Caco-2 (cell line): ENCODE measurements at regions of chr15 and their contacts with region 1.

Region 1: DNA sequence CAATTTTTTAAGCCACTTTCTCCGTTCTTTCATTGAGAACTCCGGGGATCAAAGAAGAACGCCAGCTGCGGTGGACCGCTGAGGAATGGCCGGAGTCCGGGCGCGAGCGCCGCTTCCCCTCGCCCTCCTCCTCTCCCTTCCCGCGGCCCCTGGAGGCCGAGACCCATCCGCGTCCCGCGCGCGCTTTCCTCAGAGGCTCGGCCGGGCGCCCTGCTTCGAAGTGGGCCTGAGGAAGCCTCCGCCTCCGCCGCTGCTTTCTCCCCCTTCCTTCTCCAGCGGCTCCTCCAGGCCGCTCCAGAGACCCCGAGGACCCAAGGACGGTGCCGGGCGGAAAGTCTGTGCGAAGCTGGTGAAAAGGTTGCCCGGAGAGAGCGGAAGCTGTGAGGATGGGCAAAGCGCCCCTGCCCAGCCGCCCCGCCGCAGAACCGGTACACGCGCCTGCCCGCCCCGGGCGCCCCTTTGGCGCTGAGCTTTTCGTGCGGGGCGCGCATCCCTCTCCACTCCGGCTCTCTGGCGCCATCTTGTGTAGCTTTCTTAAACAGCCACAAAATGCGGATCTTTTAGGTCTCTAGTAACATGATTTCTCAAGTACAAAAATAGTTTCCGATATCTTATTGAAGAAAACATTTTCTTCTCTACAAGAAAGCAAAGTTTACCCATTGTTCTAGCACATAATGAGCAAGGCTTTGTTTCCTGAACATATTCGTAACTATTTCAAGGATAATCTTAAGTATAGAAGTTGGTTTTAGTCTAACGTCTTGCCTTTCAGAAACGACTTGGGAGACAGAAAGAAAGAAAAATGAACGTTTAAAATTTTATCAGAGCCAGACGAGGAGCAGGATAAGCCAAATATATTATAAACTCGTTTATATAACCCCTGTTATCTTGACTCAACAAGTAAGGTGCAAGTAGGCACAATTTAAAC is 59.2 kb upstream of the FAM174B start:
- DNase-seq: peak; percentile 72 to 87
- H3K4me3 ChIP-seq: peak overlapping the region; percentile 79
- H3K4me3 Mint-ChIP-seq: peak overlapping the region; percentile 78
- H3K27ac Mint-ChIP-seq: peak overlapping the region; percentile 60
- H3K4me1 ChIP-seq: peaks cover 8% of the 10 kb centered on the region; the same call in 1 of the 2 replicates
- H3K4me1 Mint-ChIP-seq: peaks cover 9% of the 10 kb centered on the region
- H3K27me3 ChIP-seq: no peaks in the 10 kb centered on the region
- H3K27me3 Mint-ChIP-seq: no peaks in the 10 kb centered on the region
- CTCF ChIP-seq: peak; percentile 73 to 92

Region 2: GRCh38 chr15:92091155-92091734 is 623.5 kb before region 1 on chr15:
- CTCF ChIA-PET with region 1: no interaction called
- POLR2A ChIA-PET with region 1: no interaction called
- intact Hi-C with region 1: loop called (anchors 2 kb)
- DNase-seq: peak; percentile 71 to 80
- H3K4me3 ChIP-seq: no peak overlapping the region
- H3K4me3 Mint-ChIP-seq: no peak overlapping the region
- H3K27ac Mint-ChIP-seq: no peak overlapping the region
- H3K4me1 ChIP-seq: no peaks in the 10 kb centered on the region
- H3K4me1 Mint-ChIP-seq: no peaks in the 10 kb centered on the region
- H3K27me3 ChIP-seq: no peaks in the 10 kb centered on the region; the same call in 1 of the 2 replicates
- H3K27me3 Mint-ChIP-seq: peaks cover 8% of the 10 kb centered on the region
- CTCF ChIP-seq: peak; percentile 76 to 81

Region 3: DNA sequence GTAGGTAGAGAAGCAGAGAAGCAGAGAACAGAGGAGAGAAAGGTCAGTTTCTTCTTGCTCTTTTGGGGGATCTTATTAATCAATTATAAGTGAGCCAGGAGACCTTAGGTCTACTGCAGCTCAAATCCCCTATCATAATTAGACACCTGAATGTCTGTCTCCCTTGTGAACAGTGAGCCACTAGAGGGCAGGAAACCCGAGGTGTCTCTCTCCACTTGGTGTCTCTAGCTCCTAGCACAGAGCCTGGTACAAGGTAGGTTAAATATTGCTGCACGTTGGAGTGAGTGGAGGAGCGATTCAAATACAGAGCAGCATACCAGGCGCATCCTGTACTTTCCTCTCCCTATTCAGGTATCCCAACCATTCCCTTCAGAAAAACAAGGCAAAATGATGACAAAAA is 323.1 kb before region 1 on chr15:
- CTCF ChIA-PET with region 1: interaction called, 13 read pairs
- POLR2A ChIA-PET with region 1: no interaction called
- intact Hi-C with region 1: loop called (anchors 2 kb)
- DNase-seq: peak; percentile 50 to 57
- H3K4me3 ChIP-seq: no peak overlapping the region
- H3K4me3 Mint-ChIP-seq: no peak overlapping the region
- H3K27ac Mint-ChIP-seq: no peak overlapping the region
- H3K4me1 ChIP-seq: no peaks in the 10 kb centered on the region; the same call in 1 of the 2 replicates
- H3K4me1 Mint-ChIP-seq: no peaks in the 10 kb centered on the region
- H3K27me3 ChIP-seq: peaks cover 2% of the 10 kb centered on the region; the same call in 1 of the 2 replicates
- H3K27me3 Mint-ChIP-seq: peaks cover 62% of the 10 kb centered on the region
- CTCF ChIP-seq: peak; percentile 35 to 57

Region 4: DNA sequence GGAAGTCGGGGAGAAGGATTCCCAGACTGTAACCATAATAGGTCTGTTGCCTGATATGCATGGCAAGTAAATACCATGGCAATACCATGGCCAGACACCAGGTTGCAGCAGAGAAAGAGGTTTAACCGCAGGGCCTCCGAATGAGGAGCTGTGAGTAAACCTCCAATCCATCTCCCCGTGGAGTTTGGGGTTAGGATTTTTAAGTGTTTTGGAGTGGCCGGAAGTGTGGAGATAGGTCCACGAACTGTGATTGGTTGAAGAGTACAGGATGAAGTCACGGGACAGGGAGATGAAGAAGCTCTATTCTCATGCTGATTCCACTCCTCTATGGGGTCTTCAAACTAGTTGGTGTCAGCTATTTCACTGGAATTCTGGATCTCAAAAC is 193.1 kb before region 1 on chr15:
- CTCF ChIA-PET with region 1: interaction called, 31 read pairs
- POLR2A ChIA-PET with region 1: no interaction called
- intact Hi-C with region 1: loop called (anchors 1 kb)
- DNase-seq: peak; percentile 71 to 76
- H3K4me3 ChIP-seq: no peak overlapping the region
- H3K4me3 Mint-ChIP-seq: no peak overlapping the region
- H3K27ac Mint-ChIP-seq: no peak overlapping the region
- H3K4me1 ChIP-seq: no peaks in the 10 kb centered on the region
- H3K4me1 Mint-ChIP-seq: peaks cover 9% of the 10 kb centered on the region
- H3K27me3 ChIP-seq: no peaks in the 10 kb centered on the region
- H3K27me3 Mint-ChIP-seq: no peaks in the 10 kb centered on the region
- CTCF ChIP-seq: peak; percentile 62 to 72

Region 5: DNA sequence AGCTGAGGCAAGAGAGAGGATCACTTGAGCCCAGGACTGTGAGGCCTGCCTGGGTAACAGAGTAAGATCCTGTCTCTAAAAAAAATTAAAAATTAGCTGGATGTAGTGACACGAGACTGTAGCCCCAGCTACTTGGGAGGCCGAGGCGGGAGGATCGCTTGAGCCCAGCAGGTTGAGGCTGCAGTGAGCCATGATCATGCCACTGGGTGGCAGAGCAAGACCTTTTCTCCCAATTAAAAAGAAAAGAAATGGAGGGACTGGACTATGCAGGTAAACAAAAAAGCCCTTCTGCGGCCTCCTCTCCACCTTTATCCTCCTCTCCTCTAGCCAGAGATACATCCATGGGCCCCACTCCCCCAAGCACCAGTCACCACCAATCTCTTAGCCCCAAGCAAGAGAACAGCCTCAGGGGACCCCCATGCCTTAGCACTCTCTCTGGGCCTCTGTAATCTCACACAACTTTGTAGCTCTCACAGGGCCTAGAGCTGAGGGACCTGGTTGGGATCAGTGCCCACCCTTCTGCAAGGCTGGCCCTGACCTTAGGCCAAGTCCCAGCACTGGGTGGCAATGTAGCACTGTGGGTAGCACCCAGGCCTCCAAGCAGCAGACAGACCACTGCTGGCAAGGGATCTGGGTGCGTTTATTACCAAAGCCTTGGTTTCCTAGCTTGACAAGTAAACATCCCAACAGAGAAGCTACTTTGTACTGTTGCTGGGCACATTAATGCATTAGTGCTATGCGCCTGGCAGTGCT is 102.6 kb before region 1 on chr15:
- CTCF ChIA-PET with region 1: interaction called, 10 read pairs
- POLR2A ChIA-PET with region 1: no interaction called
- intact Hi-C with region 1: loop called (anchors 1 kb)
- DNase-seq: no peak
- H3K4me3 ChIP-seq: no peak overlapping the region
- H3K4me3 Mint-ChIP-seq: no peak overlapping the region
- H3K27ac Mint-ChIP-seq: no peak overlapping the region
- H3K4me1 ChIP-seq: peaks cover 12% of the 10 kb centered on the region
- H3K4me1 Mint-ChIP-seq: peaks cover 3% of the 10 kb centered on the region
- H3K27me3 ChIP-seq: no peaks in the 10 kb centered on the region
- H3K27me3 Mint-ChIP-seq: no peaks in the 10 kb centered on the region
- CTCF ChIP-seq: no peak

Region 6: GRCh38 chr15:92655178-92655995 is 59.4 kb before region 1 on chr15 and contains the start of gene FAM174B:
- CTCF ChIA-PET with region 1: interaction called, 8 read pairs
- POLR2A ChIA-PET with region 1: no interaction called
- intact Hi-C with region 1: loop called (anchors 1 kb)
- DNase-seq: peak in 1 of 2 experiments; percentile 69
- H3K4me3 ChIP-seq: peak within 1 kb of the TSS; percentile 86
- H3K4me3 Mint-ChIP-seq: peak within 1 kb of the TSS; percentile 89
- H3K27ac Mint-ChIP-seq: peak within 1 kb of the TSS; percentile 85
- H3K4me1 ChIP-seq: peaks cover 59% of the 10 kb centered on the region
- H3K4me1 Mint-ChIP-seq: peaks cover 33% of the 10 kb centered on the region
- H3K27me3 ChIP-seq: no peaks in the 10 kb centered on the region
- H3K27me3 Mint-ChIP-seq: no peaks in the 10 kb centered on the region
- CTCF ChIP-seq: no peak
- total RNA-seq, gene FAM174B: 79.4 and 87.5 TPM in 2 replicates

Region 7: GRCh38 chr15:92693691-92694331 is 20.9 kb before region 1 on chr15:
- CTCF ChIA-PET with region 1: interaction called, 4 read pairs
- POLR2A ChIA-PET with region 1: no interaction called
- intact Hi-C with region 1: loop called (anchors 1 kb)
- DNase-seq: peak; percentile 71 to 72
- H3K4me3 ChIP-seq: no peak overlapping the region
- H3K4me3 Mint-ChIP-seq: no peak overlapping the region
- H3K27ac Mint-ChIP-seq: no peak overlapping the region
- H3K4me1 ChIP-seq: 0 out of 2 replicates have a peak, but pooled peaks cover 4% of the 10 kb centered on the region
- H3K4me1 Mint-ChIP-seq: no peaks in the 10 kb centered on the region
- H3K27me3 ChIP-seq: no peaks in the 10 kb centered on the region
- H3K27me3 Mint-ChIP-seq: no peaks in the 10 kb centered on the region
- CTCF ChIP-seq: peak; percentile 40 to 71